ENCODE measurements at regions of chr1 and their contacts with region 1.

Region 1: DNA sequence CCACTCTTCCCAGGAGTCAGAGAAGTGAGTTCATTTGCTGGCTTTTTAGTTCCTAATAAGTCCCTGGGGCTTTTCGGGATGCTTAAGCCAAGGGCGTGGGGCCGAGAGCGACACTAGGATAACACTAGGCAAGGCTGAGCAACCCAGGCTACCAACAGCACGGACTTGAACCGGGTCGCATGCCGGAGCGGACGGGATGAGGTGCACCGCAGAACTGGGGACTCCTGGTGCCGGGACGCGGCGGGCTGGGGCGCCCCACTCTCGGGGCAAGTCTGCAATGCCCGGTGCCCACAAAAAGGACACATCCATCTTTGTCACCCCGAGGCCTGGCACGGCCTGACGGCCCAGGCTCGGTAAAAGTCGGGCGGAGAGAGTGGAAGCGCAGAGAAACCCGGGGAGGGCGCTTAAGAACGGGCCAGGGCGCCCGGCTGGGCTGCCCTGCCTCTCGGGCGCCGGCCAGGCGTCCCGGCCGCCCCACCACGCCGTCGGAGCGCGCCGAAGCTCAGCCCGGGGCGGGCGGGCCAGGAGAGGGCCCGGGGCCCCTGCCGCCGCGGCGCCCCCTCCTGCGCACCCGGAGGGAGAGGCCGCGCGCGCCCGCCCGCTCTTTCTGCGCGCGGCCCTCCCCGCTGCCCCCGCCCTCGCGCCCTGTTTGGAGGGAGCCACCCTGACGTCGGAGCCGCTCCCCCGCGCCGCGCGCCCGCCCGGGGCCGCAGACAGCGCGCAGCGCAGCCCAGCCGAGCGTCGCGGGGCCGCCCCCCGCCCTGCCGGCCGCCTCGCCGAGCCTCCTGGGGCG is at the start of gene NBL1:
- DNase-seq: peak; percentile 86 to 94 (median 88)
- H3K4me3 ChIP-seq: peak within 1 kb of the TSS; percentile 65
- H3K27ac ChIP-seq: peak within 1 kb of the TSS; percentile 96 to 98
- H3K4me1 ChIP-seq: peaks cover 23% of the 10 kb centered on the region
- H3K27me3 ChIP-seq: no peaks in the 10 kb centered on the region
- CTCF ChIP-seq: no peak
- EP300 ChIP-seq: no peak
- POLR2A ChIP-seq: peak; percentile 51
- total RNA-seq, gene NBL1: 217 to 852 (median 530) TPM

Region 2: GRCh38 chr1:19390901-19391595 is 252.8 kb before region 1 on chr1:
- intact Hi-C with region 1: loop called in 3 of 4 experiments (anchors 2 to 5 kb)
- DNase-seq: peak; percentile 49 to 75 (median 69)
- H3K4me3 ChIP-seq: peak overlapping the region; percentile 15
- H3K27ac ChIP-seq: peak overlapping the region; percentile 1 to 84
- H3K4me1 ChIP-seq: peaks cover 43% of the 10 kb centered on the region
- H3K27me3 ChIP-seq: no peaks in the 10 kb centered on the region
- CTCF ChIP-seq: peak; percentile 68 to 92 (median 79)
- EP300 ChIP-seq: no peak
- POLR2A ChIP-seq: no peak

Region 3: DNA sequence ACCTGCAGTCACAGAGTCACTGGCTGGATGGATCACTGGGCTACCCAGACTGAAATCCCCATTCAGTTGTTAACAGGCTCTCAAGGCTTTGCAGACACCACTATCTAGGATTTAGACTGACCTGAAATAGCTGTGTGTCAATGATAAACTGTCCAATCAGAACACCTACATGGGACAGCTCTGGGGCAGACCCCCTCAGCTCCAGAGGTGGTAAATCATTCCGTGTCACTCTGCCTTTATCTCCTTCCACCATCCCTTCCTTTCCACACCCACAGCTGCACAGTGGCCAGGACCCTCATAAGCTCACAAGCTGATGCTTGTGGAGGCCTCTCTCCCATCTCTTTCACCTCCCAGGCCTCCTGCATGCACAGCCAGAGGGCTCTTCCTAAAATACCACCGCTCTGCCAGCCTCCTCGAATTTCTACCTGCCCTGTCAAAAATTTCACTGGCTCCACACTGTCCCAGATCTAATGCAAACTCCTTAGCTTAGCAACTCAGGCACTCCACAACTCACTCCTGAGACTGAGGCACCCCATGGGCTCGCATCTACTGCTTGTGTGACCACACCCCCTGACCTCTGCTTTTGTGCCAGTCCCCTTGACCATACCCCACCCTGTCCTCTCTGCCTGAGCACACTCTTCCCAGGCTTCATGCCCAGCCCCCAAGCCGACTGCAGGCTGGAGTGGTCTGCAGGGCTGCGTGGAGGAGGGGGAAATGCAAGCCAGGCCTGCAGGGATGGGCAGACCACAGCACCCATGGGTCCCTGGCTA is 164.3 kb before region 1 on chr1:
- intact Hi-C with region 1: loop called in 2 of 4 experiments (anchors 1 to 10 kb)
- DNase-seq: no peak
- H3K4me3 ChIP-seq: no peak overlapping the region
- H3K27ac ChIP-seq: no peak overlapping the region
- H3K4me1 ChIP-seq: peaks cover 40% of the 10 kb centered on the region
- H3K27me3 ChIP-seq: no peaks in the 10 kb centered on the region
- CTCF ChIP-seq: no peak
- EP300 ChIP-seq: no peak
- POLR2A ChIP-seq: no peak

Region 4: DNA sequence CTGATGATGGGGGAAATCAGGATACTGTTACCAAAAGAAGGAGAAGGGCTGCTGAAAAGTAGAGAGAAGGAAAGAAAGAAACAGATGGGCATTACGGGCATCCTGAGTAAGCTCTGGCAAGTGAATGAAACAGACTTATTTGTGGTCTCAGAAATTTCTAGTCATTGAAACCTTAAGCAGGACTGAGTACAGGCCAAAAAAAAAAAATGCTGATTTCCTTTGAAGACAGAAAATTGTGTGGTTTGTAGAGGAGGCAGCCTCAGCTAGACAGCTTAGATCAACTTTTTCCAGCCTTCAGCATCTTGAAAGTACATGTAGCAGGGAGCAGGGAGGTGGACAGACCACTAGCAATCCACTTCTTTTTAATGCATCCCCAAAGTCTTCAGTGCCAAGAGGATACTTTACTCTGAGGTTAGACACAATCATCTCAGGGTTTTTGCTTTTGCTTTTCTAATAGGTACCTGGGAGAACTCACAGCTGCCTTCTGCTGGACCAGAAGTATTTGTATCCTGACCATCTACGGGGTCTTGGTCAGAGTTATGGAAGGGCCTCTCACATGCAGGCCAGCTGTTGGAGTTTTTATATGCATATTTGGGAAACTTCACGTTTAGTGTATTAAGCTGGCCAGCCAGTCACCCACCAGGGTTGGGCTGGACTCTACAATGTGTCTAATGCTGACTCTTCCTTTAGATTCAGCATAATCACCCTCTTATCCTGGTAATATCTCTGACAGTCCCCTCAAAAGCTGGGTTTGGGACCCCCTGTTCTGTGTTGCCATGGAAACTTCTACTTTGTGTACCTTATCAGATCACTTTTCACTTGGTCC is 147.8 kb before region 1 on chr1:
- intact Hi-C with region 1: loop called in 1 of 4 experiments (anchors 5 kb)
- DNase-seq: peak in 1 of 5 donors; percentile 26
- H3K4me3 ChIP-seq: no peak overlapping the region
- H3K27ac ChIP-seq: peak overlapping the region; percentile 71 to 80
- H3K4me1 ChIP-seq: peaks cover 15% of the 10 kb centered on the region
- H3K27me3 ChIP-seq: no peaks in the 10 kb centered on the region
- CTCF ChIP-seq: no peak
- EP300 ChIP-seq: no peak
- POLR2A ChIP-seq: no peak

Region 5: GRCh38 chr1:19547814-19548213 is 96.0 kb before region 1 on chr1:
- intact Hi-C with region 1: no loop called
- DNase-seq: no peak
- H3K4me3 ChIP-seq: no peak overlapping the region
- H3K27ac ChIP-seq: no peak overlapping the region
- H3K4me1 ChIP-seq: peaks cover 2% of the 10 kb centered on the region
- H3K27me3 ChIP-seq: no peaks in the 10 kb centered on the region
- CTCF ChIP-seq: no peak
- EP300 ChIP-seq: no peak
- POLR2A ChIP-seq: no peak

Region 6: DNA sequence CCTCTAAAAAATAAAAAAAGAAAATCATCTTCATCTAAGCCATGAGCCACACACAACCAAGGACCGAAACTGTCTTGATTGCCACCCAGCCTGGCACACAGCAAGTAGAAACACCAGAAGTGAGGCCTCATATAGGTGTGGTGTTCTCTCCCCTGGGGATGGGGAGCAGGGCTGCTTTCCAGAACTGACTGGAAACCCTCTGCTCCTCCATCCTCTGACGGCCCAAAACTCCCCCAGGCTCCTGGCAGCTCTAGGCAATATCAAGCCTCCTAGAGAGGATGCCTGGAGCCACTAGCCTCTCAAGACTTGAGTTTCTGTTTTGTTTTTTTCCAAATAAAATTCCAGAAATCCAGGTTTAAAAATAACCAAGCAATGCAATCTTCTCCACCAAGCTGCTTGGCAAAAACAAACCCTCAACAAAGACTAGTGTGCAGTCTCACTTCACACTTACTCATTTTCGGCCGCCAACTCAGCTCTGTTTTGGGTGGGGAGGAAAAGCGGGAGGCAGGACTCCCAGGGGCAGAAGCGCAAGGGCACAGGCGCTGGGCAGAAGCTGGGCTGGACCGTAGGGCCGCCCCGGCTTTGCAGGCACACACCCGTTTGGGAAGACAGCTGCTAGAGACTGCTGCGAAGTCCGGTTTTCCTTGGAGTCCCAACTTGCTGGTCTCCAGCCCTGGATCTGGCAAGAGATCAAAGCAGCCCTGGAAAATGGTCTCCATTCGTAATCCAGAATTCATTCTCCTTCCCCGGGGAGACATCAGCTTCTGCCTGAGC is 80.3 kb before region 1 on chr1:
- intact Hi-C with region 1: loop called in 1 of 4 experiments (anchors 10 kb)
- DNase-seq: peak; percentile 78 to 82 (median 81)
- H3K4me3 ChIP-seq: peak overlapping the region; percentile 33
- H3K27ac ChIP-seq: peak overlapping the region; percentile 77 to 82
- H3K4me1 ChIP-seq: peaks cover 5% of the 10 kb centered on the region
- H3K27me3 ChIP-seq: no peaks in the 10 kb centered on the region
- CTCF ChIP-seq: no peak
- EP300 ChIP-seq: no peak
- POLR2A ChIP-seq: peak; percentile 28

Measured in ovary (tissue), 10 donors.